Activated naive CD4-positive, alpha-beta T cell treated with anti-CD3 and anti-CD28 coated beads for 36 hours (primary cell): ENCODE measurements at regions of chr9 and their contacts with region 1.

Region 1: GRCh38 chr9:85610074-85610860 is 131.5 kb downstream of the AGTPBP1 start:
- DNase-seq: peak; percentile 53
- H3K4me3 Mint-ChIP-seq: peak overlapping the region; percentile 17
- H3K27ac Mint-ChIP-seq: peak overlapping the region; percentile 74
- H3K4me1 Mint-ChIP-seq: peaks cover 6% of the 10 kb centered on the region
- H3K27me3 Mint-ChIP-seq: no peaks in the 10 kb centered on the region

Region 2: DNA sequence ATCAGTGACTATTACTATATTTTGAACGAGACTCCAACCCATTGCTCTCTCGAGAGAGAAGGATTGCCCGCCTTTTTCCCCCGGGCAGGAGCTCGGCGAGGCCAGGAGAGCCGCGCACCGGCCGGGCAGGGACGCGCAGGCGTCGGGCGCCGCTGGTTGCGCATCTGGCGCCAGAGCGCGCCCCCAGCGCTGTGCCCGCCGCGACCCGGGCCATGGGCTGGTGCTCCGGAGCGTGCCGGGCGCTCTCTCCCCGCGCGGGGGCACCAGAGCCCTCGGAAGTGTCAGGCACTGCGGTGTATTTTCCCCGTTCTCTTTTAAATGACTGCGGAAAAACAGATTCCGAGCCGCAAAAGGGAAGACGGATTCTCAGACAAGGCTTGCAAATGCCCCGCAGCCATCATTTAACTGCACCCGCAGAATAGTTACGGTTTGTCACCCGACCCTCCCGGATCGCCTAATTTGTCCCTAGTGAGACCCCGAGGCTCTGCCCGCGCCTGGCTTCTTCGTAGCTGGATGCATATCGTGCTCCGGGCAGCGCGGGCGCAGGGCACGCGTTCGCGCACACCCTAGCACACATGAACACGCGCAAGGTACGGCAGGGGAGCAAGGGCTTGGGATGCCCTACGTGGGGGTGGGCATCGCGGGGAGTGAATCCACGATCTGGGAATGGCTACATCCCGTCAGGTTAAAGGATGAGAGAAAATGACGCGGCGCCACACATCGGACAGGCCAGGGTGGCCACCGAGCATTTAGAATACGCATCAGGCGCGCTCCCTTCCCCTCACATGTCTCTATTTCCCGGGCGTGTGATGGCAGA is 941.9 kb before region 1 on chr9:
- CTCF ChIA-PET with region 1: no interaction called
- intact Hi-C with region 1: loop called (anchors 10 kb)
- DNase-seq: peak; percentile 55
- H3K4me3 Mint-ChIP-seq: peak overlapping the region; percentile 22
- H3K27ac Mint-ChIP-seq: no peak overlapping the region
- H3K4me1 Mint-ChIP-seq: peaks cover 10% of the 10 kb centered on the region
- H3K27me3 Mint-ChIP-seq: peaks cover 49% of the 10 kb centered on the region